Activated naive CD4-positive, alpha-beta T cell treated with anti-CD3 and anti-CD28 coated beads for 36 hours (primary cell): ENCODE measurements at regions of chr4 and their contacts with region 1.

Region 1: GRCh38 chr4:93897559-93897958 is 69.0 kb downstream of the ATOH1 start:
- DNase-seq: no peak
- H3K4me3 Mint-ChIP-seq: no peak overlapping the region
- H3K27ac Mint-ChIP-seq: no peak overlapping the region
- H3K4me1 Mint-ChIP-seq: no peaks in the 10 kb centered on the region
- H3K27me3 Mint-ChIP-seq: no peaks in the 10 kb centered on the region

Region 2: GRCh38 chr4:94127707-94128328 is 230.3 kb after region 1 on chr4:
- CTCF ChIA-PET with region 1: interaction called, 4 read pairs
- intact Hi-C with region 1: loop called (anchors 5 kb)
- DNase-seq: no peak
- H3K4me3 Mint-ChIP-seq: no peak overlapping the region
- H3K27ac Mint-ChIP-seq: no peak overlapping the region
- H3K4me1 Mint-ChIP-seq: no peaks in the 10 kb centered on the region
- H3K27me3 Mint-ChIP-seq: peaks cover 5% of the 10 kb centered on the region

Region 3: GRCh38 chr4:94256828-94257227 is 359.3 kb after region 1 on chr4:
- CTCF ChIA-PET with region 1: no interaction called
- intact Hi-C with region 1: loop called (anchors 2 kb)
- DNase-seq: no peak
- H3K4me3 Mint-ChIP-seq: no peak overlapping the region
- H3K27ac Mint-ChIP-seq: no peak overlapping the region
- H3K4me1 Mint-ChIP-seq: peaks cover 2% of the 10 kb centered on the region
- H3K27me3 Mint-ChIP-seq: no peaks in the 10 kb centered on the region

Region 4: GRCh38 chr4:94390804-94391410 is 493.3 kb after region 1 on chr4:
- CTCF ChIA-PET with region 1: no interaction called
- intact Hi-C with region 1: loop called (anchors 5 kb)
- DNase-seq: peak; percentile 47
- H3K4me3 Mint-ChIP-seq: no peak overlapping the region
- H3K27ac Mint-ChIP-seq: no peak overlapping the region
- H3K4me1 Mint-ChIP-seq: no peaks in the 10 kb centered on the region
- H3K27me3 Mint-ChIP-seq: peaks cover 7% of the 10 kb centered on the region